ENCODE measurements at regions of chr1 and their contacts with region 1.

Region 1: DNA sequence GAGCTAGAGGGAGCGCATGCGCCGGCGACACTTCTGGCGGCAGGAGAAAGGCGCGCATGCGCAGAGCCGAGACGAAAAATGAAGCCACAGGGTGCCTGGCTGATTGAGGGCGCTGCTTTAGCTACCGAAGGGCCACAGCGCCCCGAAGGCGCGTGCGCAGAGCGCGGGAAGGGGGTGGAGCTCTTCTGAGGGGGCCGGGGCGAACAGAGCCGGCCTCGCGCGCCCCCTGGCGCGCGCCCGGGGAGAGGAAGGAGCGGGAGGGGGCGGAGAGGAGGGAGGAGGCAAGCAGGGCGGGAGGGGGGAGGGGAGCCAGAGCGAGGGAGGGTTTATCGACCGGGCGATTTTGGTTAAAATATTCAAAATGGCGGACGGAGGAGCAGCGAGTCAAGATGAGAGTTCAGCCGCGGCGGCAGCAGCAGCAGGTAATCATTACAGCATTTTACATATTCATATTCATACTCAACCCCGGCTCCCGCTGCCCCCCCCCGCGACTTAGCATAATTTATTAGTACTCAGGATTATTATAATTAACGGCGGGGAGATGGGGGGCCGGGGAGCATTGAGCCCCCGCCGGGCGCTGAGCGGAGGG is at the start of gene POU2F1:
- DNase-seq: peak; percentile 98 to 100
- ATAC-seq: peak; percentile 92 to 99 (median 96)
- H3K4me3 ChIP-seq: peak within 1 kb of the TSS; percentile 67 to 99 (median 87)
- H3K27ac ChIP-seq: peak within 1 kb of the TSS; percentile 85 to 96 (median 94)
- H3K4me1 ChIP-seq: peaks cover 6 to 32% (median 28%) of the 10 kb centered on the region in 9 donors
- H3K27me3 ChIP-seq: no peaks in the 10 kb centered on the region
- CTCF ChIP-seq: peak; percentile 48 to 74 (median 63)
- total RNA-seq, gene POU2F1: 6.2 to 13.9 (median 10.4) TPM

Region 2: GRCh38 chr1:167076136-167076710 is 144.4 kb before region 1 on chr1:
- intact Hi-C with region 1: loop called in 1 of 10 experiments (anchors 10 kb)
- DNase-seq: no peak
- ATAC-seq: no peak
- H3K4me3 ChIP-seq: no peak overlapping the region
- H3K27ac ChIP-seq: no peak overlapping the region
- H3K4me1 ChIP-seq: peaks cover 0 to 20% (median 0%) of the 10 kb centered on the region in 9 donors
- H3K27me3 ChIP-seq: peaks cover 0 to 2% (median 0%) of the 10 kb centered on the region in 7 donors
- CTCF ChIP-seq: no peak

Region 3: DNA sequence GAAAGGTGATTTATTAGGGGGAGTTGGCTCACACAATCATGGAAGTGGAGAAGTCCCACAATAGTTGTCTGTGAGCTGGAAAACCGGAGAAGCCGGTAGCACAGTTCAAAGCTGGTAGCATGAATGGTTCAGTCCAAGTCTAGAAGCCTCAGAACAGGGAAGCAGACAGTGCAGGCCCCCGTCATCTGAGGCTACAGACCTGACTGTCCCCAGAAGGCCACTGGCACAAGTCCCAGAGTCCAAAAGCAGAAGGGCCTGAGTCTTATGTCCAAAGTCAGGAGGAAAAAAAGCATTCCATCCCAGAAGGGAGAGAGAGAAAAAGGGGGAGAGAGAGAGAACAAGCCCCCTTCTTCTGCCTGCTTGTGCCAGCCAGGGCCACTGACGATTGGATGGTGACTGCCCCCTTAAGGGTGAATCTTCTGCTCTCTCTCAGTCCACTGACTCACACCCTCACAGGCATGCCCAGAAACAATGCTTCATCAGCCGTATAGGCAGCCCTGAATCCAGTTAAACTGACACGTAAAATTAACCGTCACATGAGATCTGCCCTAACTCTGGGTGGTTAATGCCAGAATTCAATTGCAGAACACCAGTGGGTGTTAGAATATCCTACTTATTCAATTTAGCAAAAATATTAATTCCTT is 49.2 kb before region 1 on chr1:
- intact Hi-C with region 1: no loop called
- DNase-seq: no peak
- ATAC-seq: peak in 1 of 8 donors; percentile 48
- H3K4me3 ChIP-seq: no peak overlapping the region
- H3K27ac ChIP-seq: no peak overlapping the region
- H3K4me1 ChIP-seq: peaks cover 0 to 8% (median 0%) of the 10 kb centered on the region in 9 donors
- H3K27me3 ChIP-seq: peaks cover 0 to 13% (median 0%) of the 10 kb centered on the region in 7 donors
- CTCF ChIP-seq: no peak

Region 4: DNA sequence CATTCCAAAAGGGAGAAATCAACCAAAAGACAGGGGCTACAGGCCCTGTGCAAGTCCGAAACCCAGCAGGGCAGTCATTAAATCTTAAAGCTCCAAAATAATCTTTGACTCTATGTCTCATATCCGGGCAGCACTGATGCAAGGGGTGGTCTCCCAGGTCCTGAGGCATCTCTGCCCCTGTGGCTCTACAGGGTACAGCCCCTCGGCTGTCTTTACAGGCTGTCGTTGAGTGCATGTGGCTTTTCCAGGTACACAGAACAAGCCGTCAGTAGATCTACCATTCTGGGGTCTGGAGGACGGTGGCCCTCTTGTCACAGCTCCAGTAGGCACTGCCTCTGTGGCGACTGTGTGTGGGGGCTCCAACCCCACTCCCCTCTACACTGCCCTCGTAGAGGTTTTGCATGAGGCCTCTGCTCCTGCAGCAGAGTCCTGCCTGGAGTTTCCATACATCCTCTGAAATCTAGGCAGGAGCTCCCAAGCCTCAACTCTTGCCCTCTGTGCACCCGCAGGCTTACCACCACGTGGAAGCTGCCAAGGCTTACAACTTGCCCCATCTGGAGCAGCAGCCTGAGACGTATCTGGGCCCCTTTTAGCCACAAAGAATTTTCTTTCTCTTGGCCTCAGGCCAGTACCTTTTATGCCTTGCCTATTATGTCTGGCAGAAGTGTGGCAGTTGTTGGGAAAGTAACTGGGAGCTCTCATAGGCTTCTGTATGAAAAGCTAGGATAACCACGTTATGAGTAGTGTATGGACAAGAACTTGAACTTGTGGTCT is 52.6 kb after region 1 on chr1:
- intact Hi-C with region 1: no loop called
- DNase-seq: peak in 1 of 2 donors; percentile 8
- ATAC-seq: peak in 6 of 8 donors; percentile 28 to 69 (median 60)
- H3K4me3 ChIP-seq: no peak overlapping the region
- H3K27ac ChIP-seq: no peak overlapping the region
- H3K4me1 ChIP-seq: peaks cover 0 to 52% (median 23%) of the 10 kb centered on the region in 9 donors
- H3K27me3 ChIP-seq: no peaks in the 10 kb centered on the region
- CTCF ChIP-seq: no peak

Region 5: DNA sequence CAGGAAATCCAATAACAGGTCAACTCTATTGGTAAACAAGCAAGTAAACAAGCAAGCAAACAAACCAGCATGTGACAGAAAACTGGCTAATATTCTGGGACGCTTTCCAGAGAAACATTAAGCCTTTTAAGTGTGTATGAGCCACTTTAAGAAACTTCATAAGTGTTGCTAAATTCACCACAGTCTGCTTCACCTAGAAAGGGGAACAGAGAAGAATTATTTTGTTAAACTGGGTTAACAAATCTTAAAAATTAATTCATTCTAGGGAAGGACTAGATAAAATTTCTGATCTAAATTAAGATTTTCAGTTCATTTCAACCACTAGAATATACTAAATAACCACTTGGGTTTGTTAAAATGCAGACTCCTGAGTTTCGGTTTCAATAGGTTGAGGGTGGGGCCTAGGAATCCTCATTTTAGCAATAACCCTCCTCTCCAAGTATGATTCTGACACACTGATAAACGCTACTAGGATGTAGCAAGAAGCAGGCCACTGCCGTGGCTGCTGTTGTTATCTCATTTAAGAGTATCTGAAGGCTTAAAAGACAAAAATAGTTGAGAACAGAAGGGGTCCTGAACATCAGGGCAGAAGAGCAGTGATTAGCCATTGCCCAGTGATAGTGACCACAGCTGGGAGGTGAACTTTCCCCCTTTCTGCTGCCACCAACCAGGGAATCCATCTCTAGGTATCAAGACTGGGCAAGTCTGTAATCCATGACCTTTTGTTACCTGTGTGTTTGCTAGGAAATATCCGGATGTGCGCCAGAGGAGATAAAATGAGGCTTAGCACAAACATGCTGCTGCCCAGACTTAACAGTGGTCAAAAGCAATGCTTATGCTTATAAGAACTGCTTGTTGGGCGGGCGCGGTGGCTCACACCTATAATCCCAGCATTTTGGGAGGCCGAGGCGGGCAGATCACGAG is 321.7 kb after region 1 on chr1:
- intact Hi-C with region 1: loop called in 1 of 10 experiments (anchors 5 kb)
- DNase-seq: no peak
- ATAC-seq: no peak
- H3K4me3 ChIP-seq: no peak overlapping the region
- H3K27ac ChIP-seq: peak overlapping the region in 1 of 10 donors; percentile 38
- H3K4me1 ChIP-seq: peaks cover 0 to 70% (median 0%) of the 10 kb centered on the region in 9 donors
- H3K27me3 ChIP-seq: no peaks in the 10 kb centered on the region
- CTCF ChIP-seq: no peak

Measured in heart right ventricle (tissue), 16 donors.